PC-9 (cell line): ENCODE measurements at regions of chr4 and their contacts with region 1.

Region 1: DNA sequence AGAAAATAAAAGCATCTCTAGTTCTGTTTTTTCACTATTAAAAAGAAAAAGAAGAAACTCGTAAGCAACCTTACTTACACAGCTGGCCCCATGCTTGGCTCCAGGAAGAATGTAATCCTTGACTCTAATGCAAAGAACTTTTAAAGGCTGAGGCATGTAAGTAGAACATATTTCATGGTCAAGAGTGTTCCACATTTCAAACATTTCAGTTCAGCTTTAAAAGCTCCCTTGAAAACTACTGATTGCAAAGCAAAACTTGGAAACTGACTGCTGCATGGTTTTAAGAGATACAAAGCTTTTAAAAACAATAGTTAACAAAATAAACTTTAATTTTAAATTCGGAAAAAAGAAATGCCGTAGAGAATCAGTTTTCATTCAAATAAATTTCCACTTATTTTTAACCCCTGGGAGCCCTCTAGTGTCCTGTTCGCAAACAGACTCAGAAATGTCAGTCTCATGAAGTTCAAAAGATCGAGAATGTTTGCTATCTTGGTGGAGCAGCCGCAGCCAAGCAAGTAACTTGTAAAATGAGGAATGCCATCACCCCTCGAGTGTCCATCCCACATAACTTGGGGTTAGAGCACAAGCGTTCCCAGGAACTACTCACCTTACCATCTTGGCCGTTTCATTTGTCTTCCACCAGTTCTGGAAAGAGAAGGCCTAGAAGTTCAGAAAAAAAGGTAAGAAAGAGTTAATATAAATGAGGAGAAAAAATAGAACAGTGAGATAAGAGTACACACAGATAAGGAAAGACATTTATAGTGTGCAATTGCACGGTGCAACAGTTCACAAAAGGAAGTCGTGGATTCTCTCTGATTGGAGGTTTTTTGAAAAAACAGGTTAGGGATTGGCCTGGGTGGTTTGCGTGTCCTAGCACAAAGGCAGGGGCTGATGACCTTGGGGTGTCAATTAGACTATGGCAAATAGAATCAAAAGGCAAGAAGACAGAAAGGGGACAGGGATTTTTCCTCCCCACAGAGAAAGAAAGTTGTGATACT is at the start of gene GASK1B:
- DNase-seq: peak; percentile 29 to 37
- H3K4me3 ChIP-seq: no peak within 1 kb of the TSS; the same call in 1 of the 2 replicates
- H3K27ac ChIP-seq: no peak within 1 kb of the TSS
- H3K4me1 ChIP-seq: peaks cover 30% of the 10 kb centered on the region
- H3K27me3 ChIP-seq: no peaks in the 10 kb centered on the region
- CTCF ChIP-seq: peak; percentile 76
- total RNA-seq, gene GASK1B: 2.8 and 4.1 TPM in 2 replicates

Region 2: DNA sequence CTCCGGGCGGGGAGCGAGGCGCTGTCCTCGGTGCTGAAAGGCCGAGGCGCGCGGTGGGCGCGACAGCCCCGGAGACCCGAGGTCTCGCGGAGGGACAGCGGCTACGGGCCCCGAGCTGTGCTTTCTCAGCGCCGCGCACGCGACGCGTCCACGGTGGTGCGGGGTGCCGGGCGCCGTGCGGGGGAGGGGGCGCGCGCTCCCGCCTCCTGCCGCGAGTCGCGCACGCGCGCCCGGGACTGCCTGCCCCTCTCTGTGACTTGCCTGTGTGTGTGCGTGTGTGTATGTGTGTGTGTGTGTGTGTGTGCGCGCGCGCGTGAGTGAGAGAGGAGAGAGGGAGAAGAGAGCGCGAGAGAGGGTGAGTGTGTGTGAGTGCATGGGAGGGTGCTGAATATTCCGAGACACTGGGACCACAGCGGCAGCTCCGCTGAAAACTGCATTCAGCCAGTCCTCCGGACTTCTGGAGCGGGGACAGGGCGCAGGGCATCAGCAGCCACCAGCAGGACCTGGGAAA is 952.1 kb before region 1 on chr4 and contains the start of gene GRIA2:
- CTCF ChIA-PET with region 1: no interaction called
- POLR2A ChIA-PET with region 1: no interaction called
- intact Hi-C with region 1: loop called (anchors 10 kb)
- DNase-seq: peak in 1 of 2 experiments; percentile 72
- H3K4me3 ChIP-seq: no peak within 1 kb of the TSS; the same call in 1 of the 2 replicates
- H3K27ac ChIP-seq: no peak within 1 kb of the TSS
- H3K4me1 ChIP-seq: no peaks in the 10 kb centered on the region
- H3K27me3 ChIP-seq: no peaks in the 10 kb centered on the region
- CTCF ChIP-seq: no peak
- total RNA-seq, gene GRIA2: not detected in 2 replicates

Region 3: DNA sequence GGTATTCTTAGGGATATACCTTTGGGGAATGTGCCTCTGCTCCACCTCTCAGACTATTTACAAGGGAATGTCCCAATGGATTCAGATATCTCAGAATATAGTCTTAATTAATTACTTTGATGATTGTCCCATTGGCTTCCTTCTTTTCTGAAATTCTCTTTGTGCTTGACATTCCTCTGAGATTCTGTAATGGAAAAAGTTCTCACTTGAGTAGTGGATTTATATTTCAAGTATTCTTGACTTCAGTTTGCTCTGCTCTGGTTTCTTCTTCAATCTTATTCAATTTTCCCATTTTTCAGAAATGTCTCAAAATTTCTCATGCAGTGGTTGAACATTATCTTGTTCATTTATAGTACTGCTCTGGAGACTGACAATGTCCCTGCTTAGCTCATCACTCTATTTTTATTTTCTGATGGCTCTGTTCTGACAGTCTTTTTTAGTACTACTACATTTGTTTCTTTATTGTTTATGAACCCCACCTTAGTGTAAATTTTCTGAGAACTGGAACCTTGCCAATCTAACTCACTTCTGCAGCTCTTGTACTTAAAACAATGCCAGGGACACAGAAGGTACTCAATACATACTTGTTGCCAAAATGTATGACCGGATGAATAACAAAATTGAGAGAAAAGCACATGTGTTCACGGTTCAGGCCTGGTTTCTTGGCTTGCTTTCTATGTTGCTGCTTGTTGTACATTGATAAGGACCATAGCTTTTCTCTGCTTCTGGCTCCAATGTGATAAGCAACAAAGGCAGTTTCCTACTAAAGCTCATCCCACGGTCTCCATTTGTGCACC is 471.5 kb before region 1 on chr4:
- CTCF ChIA-PET with region 1: no interaction called
- POLR2A ChIA-PET with region 1: no interaction called
- intact Hi-C with region 1: no loop called
- DNase-seq: no peak
- H3K4me3 ChIP-seq: no peak overlapping the region
- H3K27ac ChIP-seq: no peak overlapping the region
- H3K4me1 ChIP-seq: no peaks in the 10 kb centered on the region
- H3K27me3 ChIP-seq: no peaks in the 10 kb centered on the region
- CTCF ChIP-seq: no peak

Region 4: GRCh38 chr4:157819675-157820464 is 352.7 kb before region 1 on chr4:
- CTCF ChIA-PET with region 1: no interaction called
- POLR2A ChIA-PET with region 1: no interaction called
- intact Hi-C with region 1: loop called (anchors 10 kb)
- DNase-seq: no peak
- H3K4me3 ChIP-seq: peak overlapping the region; percentile 78; the same call in 1 of the 2 replicates
- H3K27ac ChIP-seq: no peak overlapping the region
- H3K4me1 ChIP-seq: peaks cover 27% of the 10 kb centered on the region
- H3K27me3 ChIP-seq: no peaks in the 10 kb centered on the region
- CTCF ChIP-seq: no peak

Region 5: DNA sequence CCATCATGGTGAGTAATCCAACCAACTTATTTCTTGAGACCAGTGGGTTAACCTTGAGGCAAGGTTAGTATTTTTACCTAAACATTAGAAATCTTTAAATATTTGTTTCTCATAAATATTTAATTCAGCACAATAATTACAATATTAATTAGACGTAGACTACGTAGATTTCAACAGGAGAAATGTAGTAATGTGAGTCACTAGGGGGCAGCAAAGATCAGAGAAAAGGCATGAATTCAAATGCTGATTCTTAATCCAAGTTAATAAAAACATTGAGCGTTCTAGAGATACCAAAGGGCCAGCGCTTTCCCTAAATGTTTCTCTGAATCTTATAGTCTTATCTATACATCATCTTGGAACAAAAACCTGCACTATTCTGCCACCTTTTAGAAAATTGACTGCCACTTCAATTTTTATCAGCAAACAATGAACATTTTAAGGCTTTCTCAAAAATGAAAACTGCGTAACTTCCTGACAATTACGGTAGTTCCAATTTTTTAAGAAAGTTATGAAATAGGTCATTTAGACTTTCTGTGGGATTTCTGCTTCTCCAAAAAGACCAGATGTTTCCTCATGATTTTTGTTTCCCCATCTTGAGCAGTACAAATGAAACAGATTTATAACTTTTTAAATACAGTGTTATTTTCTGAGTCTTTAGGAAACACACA is 180.4 kb before region 1 on chr4:
- CTCF ChIA-PET with region 1: interaction called, 3 read pairs
- POLR2A ChIA-PET with region 1: no interaction called
- intact Hi-C with region 1: loop called (anchors 1 kb)
- DNase-seq: peak in 1 of 2 experiments; percentile 30
- H3K4me3 ChIP-seq: no peak overlapping the region
- H3K27ac ChIP-seq: no peak overlapping the region
- H3K4me1 ChIP-seq: peaks cover 9% of the 10 kb centered on the region
- H3K27me3 ChIP-seq: no peaks in the 10 kb centered on the region
- CTCF ChIP-seq: peak; percentile 84

Region 6: GRCh38 chr4:158121187-158121586 is 51.4 kb before region 1 on chr4:
- CTCF ChIA-PET with region 1: no interaction called
- POLR2A ChIA-PET with region 1: no interaction called
- intact Hi-C with region 1: no loop called
- DNase-seq: no peak
- H3K4me3 ChIP-seq: no peak overlapping the region
- H3K27ac ChIP-seq: no peak overlapping the region
- H3K4me1 ChIP-seq: no peaks in the 10 kb centered on the region
- H3K27me3 ChIP-seq: no peaks in the 10 kb centered on the region
- CTCF ChIP-seq: no peak

Region 7: DNA sequence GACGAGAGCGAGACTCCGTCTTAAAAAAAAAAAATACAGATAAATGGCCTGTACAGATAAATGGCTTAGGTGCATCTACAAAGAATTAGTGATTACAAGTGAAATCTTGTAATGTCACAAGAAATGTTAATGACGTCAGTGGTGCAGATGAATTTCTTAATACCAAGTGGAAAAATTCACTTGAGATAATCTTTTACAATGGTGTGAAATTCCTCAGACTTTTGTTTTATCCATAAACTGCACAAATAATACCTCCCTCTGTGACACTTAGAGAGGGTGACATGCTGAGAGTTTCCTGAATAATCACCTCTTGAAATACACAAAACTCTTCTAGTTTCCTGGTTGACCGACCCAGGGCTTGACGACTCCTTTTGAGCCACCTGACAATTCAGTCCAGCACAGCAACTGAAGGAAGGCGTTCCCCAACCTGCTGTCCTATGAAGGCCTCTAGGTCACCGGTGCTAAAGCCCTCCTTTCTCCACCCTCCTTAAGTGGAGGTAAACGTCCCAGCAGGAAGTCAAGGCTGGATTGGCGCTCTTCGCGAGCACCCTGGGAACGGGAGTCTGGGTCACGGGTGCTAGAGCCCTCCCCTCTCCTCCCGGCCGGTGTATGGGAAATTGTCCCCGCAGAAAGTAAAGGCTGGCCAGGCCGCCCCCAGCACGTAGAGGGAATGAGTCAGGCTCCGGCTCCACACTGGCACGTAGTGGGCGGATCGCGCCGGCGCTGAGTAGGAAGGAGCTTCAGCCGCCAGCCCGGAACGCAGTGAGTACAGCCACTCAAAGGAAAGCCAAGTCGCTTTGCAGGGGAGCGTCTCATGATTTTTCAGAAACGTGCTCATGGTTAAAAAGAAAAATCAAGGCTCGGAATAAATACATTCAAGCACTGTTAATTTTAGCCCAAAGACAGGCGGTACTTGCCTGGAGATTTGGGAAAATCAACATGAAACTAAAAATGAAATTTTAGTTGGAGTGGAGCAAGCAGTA is 37.6 kb after region 1 on chr4 and contains the start of gene TMEM144:
- CTCF ChIA-PET with region 1: no interaction called
- POLR2A ChIA-PET with region 1: no interaction called
- intact Hi-C with region 1: loop called (anchors 1 kb)
- DNase-seq: peak; percentile 87 to 94
- H3K4me3 ChIP-seq: peak within 1 kb of the TSS; percentile 76
- H3K27ac ChIP-seq: peak within 1 kb of the TSS; percentile 86
- H3K4me1 ChIP-seq: no peaks in the 10 kb centered on the region; the same call in 1 of the 2 replicates
- H3K27me3 ChIP-seq: no peaks in the 10 kb centered on the region
- CTCF ChIP-seq: no peak
- total RNA-seq, gene TMEM144: 9.2 and 13.4 TPM in 2 replicates